Esophagus squamous epithelium (tissue), 5 donors: ENCODE measurements at regions of chr1 and their contacts with region 1.

Region 1: GRCh38 chr1:62746085-62746808 is 37.7 kb upstream of the ATG4C start:
- DNase-seq: no peak
- H3K4me3 ChIP-seq: peak overlapping the region in 1 of 4 donors; percentile 21
- H3K27ac ChIP-seq: no peak overlapping the region
- H3K4me1 ChIP-seq: no peaks in the 10 kb centered on the region
- H3K27me3 ChIP-seq: no peaks in the 10 kb centered on the region
- CTCF ChIP-seq: peak; percentile 23 to 66 (median 45)
- POLR2A ChIP-seq: no peak

Region 2: GRCh38 chr1:62476525-62477219 is 269.6 kb before region 1 on chr1:
- intact Hi-C with region 1: no loop called
- DNase-seq: no peak
- H3K4me3 ChIP-seq: no peak overlapping the region
- H3K27ac ChIP-seq: no peak overlapping the region
- H3K4me1 ChIP-seq: no peaks in the 10 kb centered on the region
- H3K27me3 ChIP-seq: no peaks in the 10 kb centered on the region
- CTCF ChIP-seq: no peak
- POLR2A ChIP-seq: no peak

Region 3: DNA sequence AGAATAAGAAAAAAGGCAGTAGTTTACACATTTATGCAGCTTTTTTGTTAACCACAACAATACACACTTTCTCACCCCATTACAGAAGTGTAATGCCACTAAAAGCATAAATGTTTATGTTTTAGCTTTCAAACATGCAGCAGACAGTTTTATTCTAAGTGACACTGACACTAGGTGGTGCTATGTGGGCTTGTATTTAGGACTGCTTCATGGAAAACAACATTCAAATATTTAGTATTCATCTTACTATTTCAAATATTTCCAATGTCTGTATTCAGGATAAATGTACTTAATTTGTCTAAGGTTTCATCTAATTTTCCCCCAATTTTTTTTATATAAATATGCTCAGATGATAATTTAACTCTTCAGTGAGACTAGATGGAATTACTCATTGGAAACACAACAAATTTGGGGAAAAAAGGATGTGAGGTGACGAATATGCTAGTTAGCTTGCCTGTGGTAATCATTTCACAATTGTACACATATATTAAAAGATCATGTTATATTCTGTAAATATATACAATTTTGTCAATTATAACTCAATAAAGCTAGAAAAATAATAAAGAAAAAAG is 238.0 kb before region 1 on chr1:
- intact Hi-C with region 1: loop called (anchors 5 kb)
- DNase-seq: no peak
- H3K4me3 ChIP-seq: no peak overlapping the region
- H3K27ac ChIP-seq: no peak overlapping the region
- H3K4me1 ChIP-seq: no peaks in the 10 kb centered on the region
- H3K27me3 ChIP-seq: no peaks in the 10 kb centered on the region
- CTCF ChIP-seq: peak in 5 of 6 experiments; percentile 22 to 59 (median 33)
- POLR2A ChIP-seq: no peak

Region 4: DNA sequence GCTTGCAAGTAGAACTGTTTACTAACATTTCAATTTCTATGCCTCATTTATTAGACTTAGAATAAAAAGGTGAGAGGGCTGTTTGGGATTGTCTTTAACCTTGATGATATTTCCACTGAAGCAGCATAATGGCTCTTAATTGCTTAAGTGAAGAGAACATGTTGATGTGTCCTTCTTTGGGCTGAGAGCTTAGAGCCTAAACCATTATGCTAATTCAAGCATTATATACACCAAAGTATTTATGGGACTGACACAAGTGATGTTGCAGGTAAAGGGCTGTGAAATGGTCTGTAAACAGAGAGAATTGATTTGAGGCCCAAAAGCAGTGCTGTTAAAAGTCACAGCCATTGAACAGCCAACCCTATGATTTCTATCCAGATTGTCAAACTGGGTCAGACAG is 151.5 kb after region 1 on chr1:
- intact Hi-C with region 1: no loop called
- DNase-seq: no peak
- H3K4me3 ChIP-seq: no peak overlapping the region
- H3K27ac ChIP-seq: no peak overlapping the region
- H3K4me1 ChIP-seq: no peaks in the 10 kb centered on the region
- H3K27me3 ChIP-seq: peaks cover 0 to 3% (median 0%) of the 10 kb centered on the region in 4 donors
- CTCF ChIP-seq: no peak
- POLR2A ChIP-seq: no peak